Aorta (tissue), 5 donors: ENCODE measurements at regions of chr2 and their contacts with region 1.

Region 1: GRCh38 chr2:134918526-134919340 is at the start of gene CCNT2:
- DNase-seq: peak; percentile 100
- ATAC-seq: peak; percentile 98
- H3K4me3 ChIP-seq: peak within 1 kb of the TSS; percentile 83 to 86
- H3K27ac ChIP-seq: peak within 1 kb of the TSS; percentile 70 to 74
- H3K4me1 ChIP-seq: peaks cover 0 to 4% of the 10 kb centered on the region in 2 donors
- H3K27me3 ChIP-seq: no peaks in the 10 kb centered on the region
- total RNA-seq, gene CCNT2: 35.9 to 49.9 TPM

Region 2: DNA sequence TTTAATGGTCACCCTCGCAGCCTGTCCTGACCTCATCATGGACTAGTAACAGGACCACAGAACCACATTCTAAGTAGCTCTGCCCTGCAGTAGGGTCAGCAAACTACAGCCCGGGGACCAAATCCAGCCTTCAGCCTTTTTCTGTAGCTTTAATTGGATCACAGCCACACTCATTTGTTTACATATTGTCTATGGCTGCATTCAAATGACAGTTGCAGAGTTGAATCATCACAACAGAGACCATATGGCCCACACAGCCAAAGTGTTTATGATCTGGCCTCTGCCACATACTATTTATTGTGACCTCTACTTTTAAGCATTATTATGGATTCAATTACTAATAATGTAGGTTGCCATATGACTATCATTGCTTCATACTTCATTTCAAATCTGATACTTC is 80.8 kb after region 1 on chr2:
- intact Hi-C with region 1: no loop called
- DNase-seq: no peak
- ATAC-seq: no peak
- H3K4me3 ChIP-seq: no peak overlapping the region
- H3K27ac ChIP-seq: no peak overlapping the region
- H3K4me1 ChIP-seq: no peaks in the 10 kb centered on the region
- H3K27me3 ChIP-seq: no peaks in the 10 kb centered on the region

Region 3: GRCh38 chr2:135741395-135742324 is 822.9 kb after region 1 on chr2 and contains the start of gene UBXN4:
- intact Hi-C with region 1: loop called (anchors 5 kb)
- DNase-seq: peak; percentile 99
- ATAC-seq: peak; percentile 99
- H3K4me3 ChIP-seq: peak within 1 kb of the TSS; percentile 75 to 98
- H3K27ac ChIP-seq: peak within 1 kb of the TSS; percentile 93 to 97
- H3K4me1 ChIP-seq: no peaks in the 10 kb centered on the region
- H3K27me3 ChIP-seq: no peaks in the 10 kb centered on the region
- total RNA-seq, gene UBXN4: 85.8 to 96.8 TPM